ENCODE measurements at regions of chr12 and their contacts with region 1.

Region 1: DNA sequence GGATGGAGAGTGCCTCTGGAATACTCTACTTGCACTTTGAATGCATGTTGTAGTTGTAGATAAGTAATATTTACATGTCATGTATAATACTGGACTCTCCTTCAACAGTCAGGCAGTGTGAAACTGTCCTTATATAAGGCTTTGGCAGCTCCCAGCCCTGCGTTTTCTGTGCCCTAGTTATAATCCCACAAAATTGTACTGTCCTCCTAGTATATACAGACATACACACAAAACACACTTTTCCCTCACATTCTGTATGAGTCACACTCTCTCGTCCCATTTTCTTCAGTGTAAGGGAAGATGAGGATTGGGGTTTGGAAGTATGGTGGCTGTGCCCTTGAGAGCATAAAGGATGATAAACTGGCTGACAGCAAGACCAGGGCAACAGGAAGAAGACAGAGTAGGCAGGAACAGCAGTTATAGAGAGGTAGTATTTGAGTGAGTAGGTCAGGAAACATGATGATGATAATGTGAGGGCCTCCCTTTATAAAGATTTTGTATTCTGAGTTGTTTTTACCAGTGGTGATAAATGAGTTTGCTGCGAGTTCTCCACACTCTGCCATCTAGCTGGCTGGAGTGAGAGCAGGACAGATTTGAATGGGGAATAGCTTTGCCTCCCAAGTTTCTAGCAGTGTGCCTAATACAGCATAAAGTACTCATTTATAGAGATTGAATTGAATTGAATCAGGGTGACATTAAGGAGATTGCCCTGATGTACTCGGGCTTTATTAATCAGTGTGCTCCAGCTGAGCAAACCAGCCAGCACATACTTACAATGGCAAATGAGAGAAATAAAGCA is 5.0 kb downstream of the CREBL2 start:
- DNase-seq: no peak
- H3K4me3 ChIP-seq: no peak overlapping the region
- H3K27ac ChIP-seq: no peak overlapping the region
- H3K4me1 ChIP-seq: peaks cover 13% of the 10 kb centered on the region
- H3K27me3 ChIP-seq: no peaks in the 10 kb centered on the region
- CTCF ChIP-seq: no peak

Region 2: DNA sequence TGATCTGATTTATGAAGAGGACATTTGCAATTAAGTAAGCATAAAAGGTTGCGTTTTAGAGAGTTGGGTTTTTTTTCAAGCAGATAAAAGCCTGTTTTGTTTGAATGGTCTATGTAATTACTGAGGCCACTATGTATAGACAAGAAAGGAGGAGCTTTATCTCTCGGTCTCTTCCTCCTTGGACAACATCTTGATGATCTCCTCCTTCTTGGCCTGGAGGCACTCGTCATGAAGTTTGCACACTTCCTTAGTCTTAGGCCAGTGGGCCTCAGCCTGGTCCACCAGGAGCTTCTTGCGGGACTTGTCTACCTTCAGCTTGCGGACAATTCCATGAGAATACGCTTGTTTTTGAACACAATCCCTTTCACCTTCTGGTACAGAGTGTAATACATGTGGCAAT is 48.7 kb before region 1 on chr12:
- CTCF ChIA-PET with region 1: no interaction called
- POLR2A ChIA-PET with region 1: interaction called, 22 read pairs
- intact Hi-C with region 1: no loop called
- DNase-seq: no peak
- H3K4me3 ChIP-seq: no peak overlapping the region
- H3K27ac ChIP-seq: no peak overlapping the region
- H3K4me1 ChIP-seq: peaks cover 8% of the 10 kb centered on the region; the same call in 1 of the 2 replicates
- H3K27me3 ChIP-seq: no peaks in the 10 kb centered on the region
- CTCF ChIP-seq: no peak

Region 3: DNA sequence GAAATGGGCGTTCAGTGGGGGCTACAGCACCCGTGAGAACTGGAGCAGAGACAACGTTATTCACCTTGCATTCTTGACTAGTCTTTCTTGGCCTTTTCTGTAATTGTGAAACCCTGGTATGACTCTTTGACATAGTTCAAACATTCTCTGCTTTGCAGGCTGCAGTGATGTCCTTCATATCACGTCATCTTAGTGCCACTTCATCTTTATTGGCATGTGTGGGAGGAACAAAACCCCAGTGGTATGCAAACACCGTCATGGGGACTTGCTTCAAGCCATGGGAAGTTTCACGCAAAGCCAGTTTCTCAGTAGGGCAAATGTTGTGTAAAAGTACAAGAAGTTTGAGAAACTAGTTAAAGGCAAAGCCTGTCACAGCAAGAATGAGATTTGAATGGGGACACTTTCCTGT is 33.8 kb before region 1 on chr12:
- CTCF ChIA-PET with region 1: no interaction called
- POLR2A ChIA-PET with region 1: interaction called, 10 read pairs
- intact Hi-C with region 1: loop called (anchors 1 kb)
- DNase-seq: peak; percentile 60 to 99
- H3K4me3 ChIP-seq: peak overlapping the region; percentile 12; the same call in 1 of the 2 replicates
- H3K27ac ChIP-seq: peak overlapping the region; percentile 91
- H3K4me1 ChIP-seq: peaks cover 64% of the 10 kb centered on the region
- H3K27me3 ChIP-seq: no peaks in the 10 kb centered on the region
- CTCF ChIP-seq: no peak

Region 4: DNA sequence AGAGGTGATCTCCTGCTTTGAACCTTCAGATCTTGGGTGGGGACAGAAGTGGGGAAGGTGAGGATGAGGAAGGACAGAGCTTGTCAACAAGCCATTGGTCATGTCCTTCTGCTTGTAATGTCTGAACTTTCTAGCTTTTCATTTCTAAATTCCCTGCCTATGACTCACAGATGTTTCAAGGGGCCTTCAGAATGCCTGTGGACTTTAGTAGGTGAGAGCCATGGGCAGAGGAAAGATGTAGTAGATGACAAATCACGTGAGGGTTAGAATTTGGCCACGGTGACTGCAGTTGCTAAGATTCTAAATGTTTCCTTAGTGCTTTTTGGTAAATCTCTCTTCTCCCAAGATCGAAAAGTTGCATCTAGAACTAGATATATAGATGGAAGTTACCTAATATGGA is 23.8 kb before region 1 on chr12:
- CTCF ChIA-PET with region 1: no interaction called
- POLR2A ChIA-PET with region 1: interaction called, 17 read pairs
- intact Hi-C with region 1: no loop called
- DNase-seq: peak; percentile 40 to 73
- H3K4me3 ChIP-seq: no peak overlapping the region
- H3K27ac ChIP-seq: peak overlapping the region; percentile 33; the same call in 1 of the 2 replicates
- H3K4me1 ChIP-seq: peaks cover 28% of the 10 kb centered on the region
- H3K27me3 ChIP-seq: no peaks in the 10 kb centered on the region
- CTCF ChIP-seq: no peak